CD14-positive monocyte (primary cell): ENCODE measurements at regions of chr6 and their contacts with region 1.

Region 1: GRCh38 chr6:27893059-27893835 is 18.9 kb downstream of the OR2B2 start:
- DNase-seq: peak; percentile 94 to 97 (median 94)
- H3K4me3 ChIP-seq: peak overlapping the region; percentile 84 to 99 (median 85)
- H3K4me3 Mint-ChIP-seq: no peak overlapping the region
- H3K27ac ChIP-seq: peak overlapping the region; percentile 61 to 73
- H3K27ac Mint-ChIP-seq: peak overlapping the region in 4 of 7 donors; percentile 93 to 98 (median 94)
- H3K4me1 ChIP-seq: peaks cover 60 to 75% of the 10 kb centered on the region in 2 donors
- H3K4me1 Mint-ChIP-seq: peaks cover 39% of the 10 kb centered on the region
- H3K27me3 ChIP-seq: no peaks in the 10 kb centered on the region
- H3K27me3 Mint-ChIP-seq: peaks cover 0 to 3% (median 0%) of the 10 kb centered on the region in 3 donors
- CTCF ChIP-seq: no peak

Region 2: DNA sequence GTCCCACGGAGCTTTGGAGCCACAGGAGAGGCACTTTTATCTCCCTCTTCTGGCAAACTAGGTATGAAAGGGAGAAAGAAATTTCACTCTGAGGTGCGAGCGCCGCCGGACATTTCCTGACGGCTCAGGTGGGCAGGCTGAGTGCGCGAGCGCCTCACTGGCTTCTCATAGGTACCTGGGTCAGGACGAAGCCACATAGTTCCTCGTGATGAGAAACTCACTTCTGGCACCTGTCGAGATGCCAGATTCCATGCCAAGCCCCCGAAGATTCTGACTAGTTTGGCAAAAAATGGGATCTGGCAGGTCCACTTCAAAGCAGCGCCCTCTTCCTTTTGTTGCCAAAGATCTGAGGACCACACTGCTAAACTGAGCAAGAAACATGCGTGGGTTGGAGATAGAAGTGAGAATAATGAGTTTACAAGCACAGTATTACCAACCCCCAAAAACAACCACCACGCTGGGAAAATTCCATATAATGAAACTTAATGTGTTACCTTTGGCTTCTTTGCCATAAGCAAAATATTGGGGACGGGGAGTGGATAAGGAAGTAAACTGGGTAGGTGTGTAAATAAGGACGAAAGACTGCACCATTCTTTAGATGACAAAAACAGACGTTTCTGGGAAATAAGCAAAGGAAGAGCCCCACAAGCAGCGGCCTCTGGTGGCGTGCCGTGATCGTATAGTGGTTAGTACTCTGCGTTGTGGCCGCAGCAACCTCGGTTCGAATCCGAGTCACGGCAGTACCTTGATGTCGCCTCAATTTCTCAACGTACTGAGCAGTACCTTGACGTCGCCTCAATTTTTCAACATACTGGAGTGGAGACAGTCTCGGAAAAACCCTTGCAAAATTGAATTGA is 735.6 kb before region 1 on chr6:
- intact Hi-C with region 1: loop called (anchors 10 kb)
- DNase-seq: peak; percentile 61 to 79 (median 74)
- H3K4me3 ChIP-seq: peak overlapping the region; percentile 32 to 67 (median 33)
- H3K4me3 Mint-ChIP-seq: peak overlapping the region; percentile 78 to 91
- H3K27ac ChIP-seq: no peak overlapping the region
- H3K27ac Mint-ChIP-seq: peak overlapping the region in 1 of 7 donors; percentile 73
- H3K4me1 ChIP-seq: peaks cover 16% of the 10 kb centered on the region in 2 donors
- H3K4me1 Mint-ChIP-seq: peaks cover 23% of the 10 kb centered on the region
- H3K27me3 ChIP-seq: no peaks in the 10 kb centered on the region
- H3K27me3 Mint-ChIP-seq: peaks cover 0 to 8% (median 7%) of the 10 kb centered on the region in 3 donors
- CTCF ChIP-seq: peak; percentile 65

Region 3: DNA sequence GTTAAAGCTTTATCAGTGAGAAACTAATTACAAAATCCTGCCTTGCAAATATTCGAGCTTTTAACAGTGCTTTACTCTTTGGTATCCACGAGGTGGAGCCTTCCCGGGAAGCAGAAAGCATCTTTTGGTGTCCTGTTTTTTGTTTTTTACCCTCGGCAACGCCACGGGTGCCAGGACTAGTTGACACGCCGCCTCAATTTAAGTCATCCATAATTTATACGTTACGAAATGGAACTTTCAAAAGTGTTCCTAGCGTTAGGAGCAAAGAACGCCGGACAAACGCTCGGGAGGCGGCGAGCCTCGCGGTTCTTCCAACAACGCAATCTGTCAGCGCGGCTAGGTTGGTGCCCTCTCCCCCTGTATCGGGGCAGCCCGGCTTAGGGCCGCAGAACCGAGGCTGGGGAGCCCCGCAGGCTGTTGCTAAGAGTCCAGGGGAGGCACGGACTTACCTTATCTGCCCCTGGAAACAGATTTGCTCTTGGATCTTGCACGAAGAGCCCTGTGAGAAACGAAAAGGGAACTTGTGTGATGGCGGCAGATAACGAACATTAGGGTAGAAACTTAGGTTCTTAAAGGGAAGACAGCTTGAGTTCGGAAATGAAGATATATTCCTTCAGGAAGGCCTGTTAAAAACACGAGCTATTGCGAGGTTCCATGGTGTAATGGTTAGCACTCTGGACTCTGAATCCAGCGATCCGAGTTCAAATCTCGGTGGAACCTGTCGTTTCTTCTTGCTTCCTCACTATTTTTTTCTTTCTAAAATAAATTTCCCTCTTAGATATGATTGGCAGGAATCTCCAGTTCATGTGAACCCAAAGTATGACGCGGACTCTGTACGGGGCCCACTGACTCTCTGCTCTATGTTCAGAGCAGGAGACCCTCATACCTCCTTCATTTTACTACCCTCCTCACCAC is 374.1 kb before region 1 on chr6:
- intact Hi-C with region 1: loop called in 1 of 2 experiments (anchors 10 kb)
- DNase-seq: peak; percentile 60 to 71 (median 66)
- H3K4me3 ChIP-seq: peak overlapping the region; percentile 73 to 94 (median 91)
- H3K4me3 Mint-ChIP-seq: peak overlapping the region; percentile 84 to 97
- H3K27ac ChIP-seq: peak overlapping the region; percentile 41 to 54
- H3K27ac Mint-ChIP-seq: peak overlapping the region in 4 of 7 donors; percentile 23 to 67 (median 62)
- H3K4me1 ChIP-seq: peaks cover 8 to 17% of the 10 kb centered on the region in 2 donors
- H3K4me1 Mint-ChIP-seq: peaks cover 21% of the 10 kb centered on the region
- H3K27me3 ChIP-seq: peaks cover 26 to 29% of the 10 kb centered on the region in 2 donors
- H3K27me3 Mint-ChIP-seq: peaks cover 30 to 43% (median 37%) of the 10 kb centered on the region in 3 donors
- CTCF ChIP-seq: peak; percentile 83

Region 4: DNA sequence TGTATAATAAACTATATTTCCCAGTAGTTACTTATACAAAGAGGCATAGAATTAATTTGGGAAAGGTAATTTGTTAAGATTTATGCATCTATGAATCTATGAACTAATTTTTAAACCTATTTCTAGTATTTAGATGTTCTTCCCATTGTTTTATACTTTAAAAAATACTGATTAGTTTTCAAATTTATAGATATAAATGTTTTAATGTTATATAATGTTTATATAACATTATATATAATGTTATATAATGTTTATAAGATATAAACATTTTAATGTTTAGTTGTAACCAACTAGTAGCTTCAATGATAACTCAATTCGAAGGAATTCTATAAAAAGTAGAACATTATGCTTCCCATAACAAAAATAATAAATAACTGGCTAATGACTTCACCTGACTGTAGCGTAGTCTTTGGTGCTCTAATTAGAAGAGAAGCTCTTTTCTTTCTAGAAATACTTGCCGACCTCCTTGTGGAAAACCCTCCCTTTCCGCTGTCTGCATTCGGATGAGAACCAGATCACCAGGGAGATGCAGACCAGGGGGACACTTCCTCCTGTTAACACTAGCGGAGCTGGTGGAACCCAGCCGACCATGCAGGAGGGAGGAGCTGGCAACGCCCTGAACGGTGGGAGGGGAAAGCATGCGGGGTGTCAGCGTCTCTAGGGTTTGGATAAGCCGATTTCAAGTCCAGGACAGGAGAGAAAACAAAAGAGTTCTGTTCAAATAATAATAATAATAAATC is 139.4 kb before region 1 on chr6:
- intact Hi-C with region 1: loop called in 1 of 2 experiments (anchors 5 kb)
- DNase-seq: peak; percentile 39 to 62 (median 51)
- H3K4me3 ChIP-seq: peak overlapping the region; percentile 22 to 81 (median 32)
- H3K4me3 Mint-ChIP-seq: peak overlapping the region; percentile 73 to 90
- H3K27ac ChIP-seq: no peak overlapping the region
- H3K27ac Mint-ChIP-seq: peak overlapping the region; percentile 45 to 82 (median 61)
- H3K4me1 ChIP-seq: peaks cover 34 to 42% of the 10 kb centered on the region in 2 donors
- H3K4me1 Mint-ChIP-seq: peaks cover 37% of the 10 kb centered on the region
- H3K27me3 ChIP-seq: no peaks in the 10 kb centered on the region
- H3K27me3 Mint-ChIP-seq: peaks cover 0 to 5% (median under 1%) of the 10 kb centered on the region in 3 donors
- CTCF ChIP-seq: no peak

Region 5: DNA sequence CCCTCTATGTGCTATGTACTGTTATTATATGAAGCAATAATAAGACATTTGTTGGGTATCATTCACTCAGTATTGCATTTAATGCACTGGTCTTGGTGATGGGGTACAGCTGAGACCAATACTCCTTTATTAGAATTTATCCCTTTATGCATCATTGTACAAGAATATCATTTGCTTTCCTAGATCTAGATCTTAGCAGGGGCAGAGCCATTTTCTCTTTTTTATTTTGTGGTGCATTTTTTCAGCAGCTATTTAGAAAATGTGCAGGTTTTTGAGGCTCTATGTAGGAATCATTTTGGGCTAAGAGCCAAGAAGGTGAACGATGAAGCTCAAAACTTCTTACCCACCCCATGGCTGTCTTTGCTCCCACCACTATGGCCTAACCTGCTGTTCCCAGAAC is 95.3 kb before region 1 on chr6:
- intact Hi-C with region 1: no loop called
- DNase-seq: no peak
- H3K4me3 ChIP-seq: no peak overlapping the region
- H3K4me3 Mint-ChIP-seq: no peak overlapping the region
- H3K27ac ChIP-seq: no peak overlapping the region
- H3K27ac Mint-ChIP-seq: no peak overlapping the region
- H3K4me1 ChIP-seq: peaks cover 1 to 2% of the 10 kb centered on the region in 2 donors
- H3K4me1 Mint-ChIP-seq: peaks cover 9% of the 10 kb centered on the region
- H3K27me3 ChIP-seq: no peaks in the 10 kb centered on the region
- H3K27me3 Mint-ChIP-seq: peaks cover 2 to 7% (median 3%) of the 10 kb centered on the region in 3 donors
- CTCF ChIP-seq: no peak

Region 6: GRCh38 chr6:27838058-27838944 is 54.9 kb before region 1 on chr6:
- intact Hi-C with region 1: loop called (anchors 5 kb)
- DNase-seq: peak; percentile 95 to 100 (median 97)
- H3K4me3 ChIP-seq: peak overlapping the region; percentile 75 to 87 (median 77)
- H3K4me3 Mint-ChIP-seq: no peak overlapping the region
- H3K27ac ChIP-seq: peak overlapping the region; percentile 95 to 96
- H3K27ac Mint-ChIP-seq: no peak overlapping the region
- H3K4me1 ChIP-seq: peaks cover 33 to 47% of the 10 kb centered on the region in 2 donors
- H3K4me1 Mint-ChIP-seq: peaks cover 14% of the 10 kb centered on the region
- H3K27me3 ChIP-seq: no peaks in the 10 kb centered on the region
- H3K27me3 Mint-ChIP-seq: no peaks in the 10 kb centered on the region
- CTCF ChIP-seq: no peak

Region 7: DNA sequence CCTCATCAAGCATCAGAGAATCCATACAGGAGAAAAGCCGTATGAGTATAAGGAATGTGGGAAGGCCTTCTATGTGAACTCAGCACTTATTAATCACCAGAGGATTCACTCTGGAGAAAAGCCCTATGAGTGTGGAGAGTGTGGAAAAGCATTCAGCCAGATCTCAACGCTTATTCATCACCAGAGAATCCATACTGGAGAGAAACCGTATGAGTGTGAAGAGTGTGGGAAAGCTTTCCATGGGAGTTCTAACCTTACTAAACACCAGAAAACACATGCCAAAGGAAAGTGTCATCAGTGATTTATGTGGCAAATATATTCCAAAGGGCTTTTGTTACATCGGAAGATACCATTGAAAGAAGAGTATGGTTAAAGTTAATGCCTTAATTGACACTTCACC is 273.8 kb after region 1 on chr6:
- intact Hi-C with region 1: no loop called
- DNase-seq: no peak
- H3K4me3 ChIP-seq: no peak overlapping the region
- H3K4me3 Mint-ChIP-seq: no peak overlapping the region
- H3K27ac ChIP-seq: no peak overlapping the region
- H3K27ac Mint-ChIP-seq: no peak overlapping the region
- H3K4me1 ChIP-seq: peaks cover 2% of the 10 kb centered on the region in 2 donors
- H3K4me1 Mint-ChIP-seq: peaks cover 2% of the 10 kb centered on the region
- H3K27me3 ChIP-seq: peaks cover 0 to 2% of the 10 kb centered on the region in 2 donors
- H3K27me3 Mint-ChIP-seq: peaks cover 0 to 2% (median 1%) of the 10 kb centered on the region in 3 donors
- CTCF ChIP-seq: no peak